ENCODE measurements at regions of chrX and their contacts with region 1.

Region 1: GRCh38 chrX:131633285-131633917 is 89.5 kb downstream of the OR13H1 start:
- DNase-seq: peak; percentile 47
- ATAC-seq: peak; percentile 65
- H3K4me3 Mint-ChIP-seq: no peak overlapping the region
- H3K27ac Mint-ChIP-seq: no peak overlapping the region
- H3K4me1 Mint-ChIP-seq: no peaks in the 10 kb centered on the region
- H3K27me3 Mint-ChIP-seq: no peaks in the 10 kb centered on the region
- CTCF ChIP-seq: peak; percentile 70

Region 2: DNA sequence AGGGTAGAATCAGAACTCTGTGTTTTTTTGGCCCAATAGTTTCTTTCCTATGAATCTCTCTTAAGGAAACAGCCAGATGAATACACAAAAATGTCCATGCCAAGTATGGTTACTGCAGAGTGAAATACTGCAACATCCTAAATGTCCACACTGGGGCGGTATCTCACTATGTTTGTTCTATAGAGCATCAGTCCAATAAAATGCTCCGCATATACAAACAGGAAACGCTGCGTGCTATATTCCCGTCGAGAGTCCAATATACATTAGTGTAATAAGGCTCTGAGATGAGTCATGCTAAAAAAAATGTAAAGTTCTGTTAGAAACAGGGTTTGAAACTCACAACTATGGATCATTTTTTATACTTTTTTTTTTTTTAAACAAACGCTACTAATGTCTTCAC is 657.5 kb before region 1 on chrX:
- CTCF ChIA-PET with region 1: no interaction called
- POLR2A ChIA-PET with region 1: no interaction called
- intact Hi-C with region 1: loop called (anchors 10 kb)
- DNase-seq: peak; percentile 50
- ATAC-seq: peak; percentile 77
- H3K4me3 Mint-ChIP-seq: no peak overlapping the region
- H3K27ac Mint-ChIP-seq: no peak overlapping the region
- H3K4me1 Mint-ChIP-seq: no peaks in the 10 kb centered on the region
- H3K27me3 Mint-ChIP-seq: no peaks in the 10 kb centered on the region
- CTCF ChIP-seq: peak; percentile 42

Region 3: GRCh38 chrX:131617182-131617581 is 16.2 kb before region 1 on chrX:
- CTCF ChIA-PET with region 1: no interaction called
- POLR2A ChIA-PET with region 1: no interaction called
- intact Hi-C with region 1: no loop called
- DNase-seq: no peak
- ATAC-seq: no peak
- H3K4me3 Mint-ChIP-seq: no peak overlapping the region
- H3K27ac Mint-ChIP-seq: no peak overlapping the region
- H3K4me1 Mint-ChIP-seq: no peaks in the 10 kb centered on the region
- H3K27me3 Mint-ChIP-seq: peaks cover 6% of the 10 kb centered on the region
- CTCF ChIP-seq: no peak

Region 4: DNA sequence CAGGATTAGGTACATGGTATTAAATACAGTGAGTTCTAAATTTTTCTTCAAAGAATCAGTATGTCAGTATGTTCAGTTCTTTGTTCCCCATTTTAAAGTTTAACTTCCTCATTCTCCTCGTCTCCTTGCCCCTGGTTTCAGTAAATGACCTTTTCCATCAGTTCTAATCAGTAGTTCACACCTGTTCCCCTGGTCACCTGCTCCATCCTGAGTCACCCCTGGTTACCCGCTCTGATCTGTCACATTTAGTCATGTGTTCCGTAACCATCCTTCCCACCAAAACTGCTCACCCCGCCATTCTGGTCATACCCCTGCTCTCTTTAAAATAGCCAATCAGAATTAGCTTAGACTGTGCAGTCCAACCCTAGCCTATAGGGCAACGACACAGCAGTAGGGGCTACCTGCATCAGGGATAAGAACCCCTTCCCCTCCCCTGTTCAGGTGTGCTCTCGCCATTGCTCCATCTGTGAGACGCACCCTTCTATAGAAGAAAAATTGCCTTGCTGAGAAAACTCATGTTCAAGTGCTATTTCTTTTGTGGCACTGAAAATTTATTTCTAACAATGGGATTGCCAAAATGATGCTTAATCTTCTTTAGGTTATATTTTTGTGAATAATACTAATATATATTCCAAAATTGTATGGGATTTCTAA is 91.7 kb after region 1 on chrX:
- CTCF ChIA-PET with region 1: no interaction called
- POLR2A ChIA-PET with region 1: no interaction called
- intact Hi-C with region 1: no loop called
- DNase-seq: no peak
- ATAC-seq: no peak
- H3K4me3 Mint-ChIP-seq: no peak overlapping the region
- H3K27ac Mint-ChIP-seq: no peak overlapping the region
- H3K4me1 Mint-ChIP-seq: no peaks in the 10 kb centered on the region
- H3K27me3 Mint-ChIP-seq: no peaks in the 10 kb centered on the region
- CTCF ChIP-seq: no peak